T-cell (primary cell): ENCODE measurements at regions of chr4 and their contacts with region 1.

Region 1: GRCh38 chr4:17587094-17587822 is 10.3 kb downstream of the LAP3 start:
- DNase-seq: no peak
- ATAC-seq: no peak
- H3K4me3 ChIP-seq: no peak overlapping the region
- H3K4me3 Mint-ChIP-seq: no peak overlapping the region
- H3K27ac ChIP-seq: no peak overlapping the region
- H3K27ac Mint-ChIP-seq: no peak overlapping the region
- H3K4me1 ChIP-seq: no peaks in the 10 kb centered on the region
- H3K4me1 Mint-ChIP-seq: peaks cover 0 to 10% (median 7%) of the 10 kb centered on the region in 3 donors
- H3K27me3 ChIP-seq: no peaks in the 10 kb centered on the region
- H3K27me3 Mint-ChIP-seq: no peaks in the 10 kb centered on the region

Region 2: DNA sequence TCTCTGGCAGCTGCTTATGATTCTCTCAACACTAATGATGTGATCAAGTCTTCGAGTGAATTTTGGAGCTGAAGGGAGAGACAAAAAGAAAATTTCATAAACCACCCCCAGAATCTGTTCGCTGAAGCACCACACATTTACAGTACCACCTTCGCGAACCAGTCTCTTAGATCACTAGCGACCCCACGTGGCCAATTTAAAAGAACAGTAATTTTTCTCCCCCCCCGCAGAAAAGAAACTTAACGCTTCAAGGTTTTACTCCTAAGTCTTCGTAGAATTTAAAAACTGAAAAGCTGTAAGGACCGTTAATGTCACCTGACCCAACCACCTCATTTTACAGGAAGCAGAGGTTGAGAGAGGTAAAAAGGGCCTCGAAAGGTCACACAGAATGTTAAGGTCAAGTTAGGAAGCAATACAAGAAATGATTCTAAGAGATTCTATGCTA is 262.9 kb before region 1 on chr4:
- CTCF ChIA-PET with region 1: interaction called in 1 of 2 experiments, 11 read pairs
- POLR2A ChIA-PET with region 1: no interaction called
- DNase-seq: peak in 27 of 35 experiments; percentile 8 to 68 (median 29)
- ATAC-seq: peak; percentile 43 to 62 (median 48)
- H3K4me3 ChIP-seq: no peak overlapping the region
- H3K4me3 Mint-ChIP-seq: peak overlapping the region; percentile 26 to 48 (median 47)
- H3K27ac ChIP-seq: no peak overlapping the region
- H3K27ac Mint-ChIP-seq: peak overlapping the region; percentile 43 to 59
- H3K4me1 ChIP-seq: peaks cover 0 to 7% of the 10 kb centered on the region in 2 experiments
- H3K4me1 Mint-ChIP-seq: peaks cover 10 to 14% (median 10%) of the 10 kb centered on the region in 3 donors
- H3K27me3 ChIP-seq: no peaks in the 10 kb centered on the region
- H3K27me3 Mint-ChIP-seq: no peaks in the 10 kb centered on the region